GM10248 (cell line): ENCODE measurements at regions of chr19 and their contacts with region 1.

Region 1: DNA sequence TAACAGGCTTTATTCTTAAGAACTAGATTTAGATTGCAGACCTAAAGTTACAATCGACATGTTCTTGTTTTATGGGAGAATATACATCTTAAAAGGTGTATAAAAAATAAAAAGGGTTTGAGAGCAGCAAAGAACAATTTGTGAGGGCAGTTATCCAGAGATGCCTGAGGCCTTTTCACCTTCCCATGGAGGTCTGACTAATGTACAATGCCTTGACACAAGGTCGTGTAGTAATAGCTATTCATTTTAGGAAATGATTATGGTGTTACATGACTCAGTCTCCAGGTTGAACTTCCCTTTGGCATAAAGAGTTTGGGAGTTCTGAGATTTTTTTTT is 20.0 kb downstream of the CEACAM6 start:
- DNase-seq: no peak
- CTCF ChIP-seq: no peak

Region 2: GRCh38 chr19:41785653-41786052 is 10.3 kb after region 1 on chr19:
- CTCF ChIA-PET with region 1: interaction called, 21 read pairs
- POLR2A ChIA-PET with region 1: no interaction called
- DNase-seq: peak; percentile 83
- CTCF ChIP-seq: peak; percentile 90